ENCODE measurements at regions of chr20 and their contacts with region 1.

Region 1: GRCh38 chr20:36550797-36551299 is 9.5 kb downstream of the MYL9 start:
- DNase-seq: peak; percentile 64
- H3K4me3 ChIP-seq: no peak overlapping the region
- H3K27ac ChIP-seq: peak overlapping the region in 4 of 8 donors; percentile 25 to 54 (median 38)
- H3K4me1 ChIP-seq: peaks cover 0 to 33% (median 9%) of the 10 kb centered on the region in 6 donors
- H3K27me3 ChIP-seq: no peaks in the 10 kb centered on the region
- CTCF ChIP-seq: no peak
- POLR2A ChIP-seq: no peak

Region 2: GRCh38 chr20:36605399-36606157 is 54.7 kb after region 1 on chr20 and contains the start of gene RAB5IF:
- intact Hi-C with region 1: loop called (anchors 10 kb)
- DNase-seq: peak; percentile 100
- H3K4me3 ChIP-seq: peak within 1 kb of the TSS; percentile 70 to 98 (median 94)
- H3K27ac ChIP-seq: peak within 1 kb of the TSS; percentile 84 to 100 (median 96)
- H3K4me1 ChIP-seq: peaks cover 12 to 56% (median 39%) of the 10 kb centered on the region in 6 donors
- H3K27me3 ChIP-seq: no peaks in the 10 kb centered on the region
- CTCF ChIP-seq: peak; percentile 91 to 100 (median 99)
- POLR2A ChIP-seq: peak; percentile 48 to 84 (median 76)
- total RNA-seq, gene RAB5IF: 67.8 to 131 (median 105) TPM

Region 3: DNA sequence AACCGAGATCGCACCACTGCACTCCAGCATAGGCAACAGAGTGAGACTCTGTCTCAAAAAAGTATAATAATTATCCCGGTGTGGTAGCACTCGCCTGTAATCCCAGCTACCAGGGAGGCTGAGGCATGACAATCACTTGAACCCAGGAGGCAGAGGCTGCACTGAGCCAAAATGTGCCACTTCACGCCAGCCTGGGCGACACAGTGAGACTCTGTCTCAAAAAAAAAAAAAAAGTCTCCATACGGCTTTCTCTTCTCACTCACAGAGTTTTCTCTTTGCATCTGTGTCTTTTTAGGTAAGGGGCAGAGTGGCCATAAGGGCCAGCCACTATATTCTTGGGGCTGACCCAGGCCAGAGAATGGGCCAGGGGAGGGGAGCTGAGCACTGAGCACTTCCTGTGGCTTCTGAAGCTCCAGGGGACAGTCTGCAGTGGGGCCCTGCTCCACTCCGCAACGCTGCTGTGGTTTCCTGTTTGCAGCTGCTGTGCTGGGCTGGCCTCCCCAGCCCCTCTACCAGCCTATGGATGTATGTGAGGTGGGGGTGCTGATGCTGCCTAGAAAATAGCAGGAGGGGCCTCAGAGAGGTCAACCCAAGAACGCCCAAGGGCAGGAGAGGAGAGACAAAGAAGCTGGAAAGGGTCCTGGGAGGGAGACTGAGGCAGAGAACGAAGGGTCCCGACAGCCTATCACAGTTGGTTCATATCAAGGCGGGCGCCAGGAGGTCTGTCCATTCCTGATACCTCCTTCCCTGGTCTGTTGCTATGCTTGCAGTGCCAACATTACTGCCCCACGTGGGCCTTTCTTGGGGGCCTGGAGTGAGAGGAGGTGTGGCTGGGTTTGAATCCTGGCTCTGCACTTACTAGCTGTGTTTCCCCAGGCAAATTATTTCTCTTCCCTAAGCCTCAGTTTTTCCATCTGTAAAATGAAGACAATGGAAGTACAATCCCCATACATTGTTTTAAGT is 79.2 kb after region 1 on chr20:
- intact Hi-C with region 1: no loop called
- DNase-seq: peak; percentile 87
- H3K4me3 ChIP-seq: peak overlapping the region in 1 of 8 donors; percentile 25
- H3K27ac ChIP-seq: peak overlapping the region in 7 of 8 donors; percentile 34 to 81 (median 69)
- H3K4me1 ChIP-seq: peaks cover 9 to 40% (median 21%) of the 10 kb centered on the region in 6 donors
- H3K27me3 ChIP-seq: no peaks in the 10 kb centered on the region
- CTCF ChIP-seq: no peak
- POLR2A ChIP-seq: no peak